CD4-positive, alpha-beta memory T cell (primary cell): ENCODE measurements at regions of chr11 and their contacts with region 1.

Region 1: DNA sequence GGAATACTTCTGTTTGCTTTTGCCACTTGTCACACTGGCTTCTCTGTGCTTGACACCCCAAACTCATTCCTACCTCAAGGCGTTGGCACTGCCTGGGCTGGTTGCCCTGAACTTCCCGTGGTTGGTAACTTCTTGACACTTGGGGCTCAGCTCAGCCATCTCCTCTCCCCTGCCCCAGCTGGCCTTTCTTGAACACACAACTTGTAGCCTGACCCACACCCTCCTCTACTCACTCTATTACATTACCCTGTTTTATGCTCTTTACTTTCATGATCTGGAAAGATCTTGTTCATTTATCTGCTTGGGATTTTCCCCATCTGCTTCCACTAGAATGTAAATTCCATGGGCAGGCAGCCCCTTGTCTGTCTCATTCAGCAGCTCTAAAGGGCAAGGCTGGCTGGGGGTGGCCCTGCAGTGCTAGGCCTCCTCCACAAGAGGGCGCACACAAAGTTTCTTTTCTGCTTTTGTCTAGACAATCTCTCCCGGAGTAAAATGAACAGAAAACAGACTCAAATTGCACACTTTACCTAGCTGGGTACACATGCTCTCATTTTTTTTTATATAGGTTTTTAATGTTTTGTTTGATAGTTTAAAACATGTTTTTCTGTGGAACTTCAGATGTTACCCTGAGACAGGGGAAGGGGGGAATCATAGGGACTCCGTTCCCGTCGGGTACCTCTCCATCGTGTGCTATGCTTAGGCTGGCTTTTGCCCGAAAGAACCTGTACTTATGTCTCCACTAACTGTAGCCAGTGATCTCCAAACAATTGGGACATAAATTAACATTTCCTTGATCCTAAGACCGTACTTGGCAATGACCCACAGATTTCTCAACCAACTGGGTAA is 16.4 kb upstream of the MRGPRX2 start:
- DNase-seq: peak; percentile 34 to 54 (median 40)
- H3K4me3 ChIP-seq: no peak overlapping the region
- H3K4me3 Mint-ChIP-seq: no peak overlapping the region
- H3K27ac ChIP-seq: no peak overlapping the region
- H3K27ac Mint-ChIP-seq: no peak overlapping the region
- H3K4me1 ChIP-seq: no peaks in the 10 kb centered on the region
- H3K4me1 Mint-ChIP-seq: peaks cover 0 to under 1% (median 0%) of the 10 kb centered on the region in 4 donors
- H3K27me3 ChIP-seq: no peaks in the 10 kb centered on the region
- H3K27me3 Mint-ChIP-seq: peaks cover 5 to 8% of the 10 kb centered on the region in 2 donors

Region 2: GRCh38 chr11:19060629-19061028 is 16.3 kb before region 1 on chr11 and contains the start of gene MRGPRX2:
- CTCF ChIA-PET with region 1: interaction called, 50 read pairs
- POLR2A ChIA-PET with region 1: no interaction called
- intact Hi-C with region 1: no loop called
- DNase-seq: peak in 1 of 5 donors; percentile 1
- H3K4me3 ChIP-seq: no peak within 1 kb of the TSS
- H3K4me3 Mint-ChIP-seq: peak within 1 kb of the TSS in 7 of 8 donors; percentile 4 to 70 (median 35)
- H3K27ac ChIP-seq: no peak within 1 kb of the TSS
- H3K27ac Mint-ChIP-seq: peak within 1 kb of the TSS in 5 of 7 donors; percentile 25 to 71 (median 54)
- H3K4me1 ChIP-seq: peaks cover 20% of the 10 kb centered on the region
- H3K4me1 Mint-ChIP-seq: peaks cover 15 to 29% (median 21%) of the 10 kb centered on the region in 4 donors
- H3K27me3 ChIP-seq: no peaks in the 10 kb centered on the region
- H3K27me3 Mint-ChIP-seq: peaks cover 0 to under 1% of the 10 kb centered on the region in 2 donors
- total RNA-seq, gene MRGPRX2: not detected

Region 3: DNA sequence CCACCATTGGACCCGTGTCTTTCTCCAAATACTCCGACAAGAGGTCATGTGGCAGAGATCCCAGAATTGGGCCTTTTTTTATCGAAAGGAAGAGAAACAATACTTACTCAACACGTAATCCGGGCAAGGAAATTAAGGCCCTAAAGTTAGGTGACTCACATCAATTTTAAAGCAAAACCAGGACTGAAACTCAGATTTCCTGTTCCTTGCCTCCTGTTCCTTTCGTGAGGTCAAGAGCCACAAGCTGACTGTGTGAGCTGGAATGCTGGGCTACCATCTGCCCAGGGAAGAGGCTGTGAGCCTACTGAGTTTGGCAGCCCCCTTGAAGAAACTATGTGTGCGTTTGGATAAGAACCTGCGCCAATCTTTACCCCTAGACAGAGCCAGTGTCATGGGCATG is 10.7 kb after region 1 on chr11:
- CTCF ChIA-PET with region 1: interaction called, 19 read pairs
- POLR2A ChIA-PET with region 1: no interaction called
- intact Hi-C with region 1: no loop called
- DNase-seq: no peak
- H3K4me3 ChIP-seq: no peak overlapping the region
- H3K4me3 Mint-ChIP-seq: no peak overlapping the region
- H3K27ac ChIP-seq: no peak overlapping the region
- H3K27ac Mint-ChIP-seq: no peak overlapping the region
- H3K4me1 ChIP-seq: no peaks in the 10 kb centered on the region
- H3K4me1 Mint-ChIP-seq: no peaks in the 10 kb centered on the region
- H3K27me3 ChIP-seq: no peaks in the 10 kb centered on the region
- H3K27me3 Mint-ChIP-seq: peaks cover 13 to 14% of the 10 kb centered on the region in 2 donors

Region 4: GRCh38 chr11:19116971-19117750 is 40.2 kb after region 1 on chr11 and contains the start of gene ZDHHC13:
- CTCF ChIA-PET with region 1: interaction called, 5 read pairs
- POLR2A ChIA-PET with region 1: interaction called, 3 read pairs
- intact Hi-C with region 1: loop called (anchors 1 kb)
- DNase-seq: peak; percentile 91 to 93 (median 92)
- H3K4me3 ChIP-seq: peak within 1 kb of the TSS; percentile 78 to 81
- H3K4me3 Mint-ChIP-seq: peak within 1 kb of the TSS; percentile 90 to 98 (median 94)
- H3K27ac ChIP-seq: peak within 1 kb of the TSS; percentile 73
- H3K27ac Mint-ChIP-seq: peak within 1 kb of the TSS; percentile 46 to 97 (median 92)
- H3K4me1 ChIP-seq: peaks cover 44% of the 10 kb centered on the region
- H3K4me1 Mint-ChIP-seq: peaks cover 40 to 59% (median 48%) of the 10 kb centered on the region in 4 donors
- H3K27me3 ChIP-seq: no peaks in the 10 kb centered on the region
- H3K27me3 Mint-ChIP-seq: peaks cover 0 to 2% of the 10 kb centered on the region in 2 donors
- total RNA-seq, gene ZDHHC13: 15.6 to 16.1 TPM

Region 5: DNA sequence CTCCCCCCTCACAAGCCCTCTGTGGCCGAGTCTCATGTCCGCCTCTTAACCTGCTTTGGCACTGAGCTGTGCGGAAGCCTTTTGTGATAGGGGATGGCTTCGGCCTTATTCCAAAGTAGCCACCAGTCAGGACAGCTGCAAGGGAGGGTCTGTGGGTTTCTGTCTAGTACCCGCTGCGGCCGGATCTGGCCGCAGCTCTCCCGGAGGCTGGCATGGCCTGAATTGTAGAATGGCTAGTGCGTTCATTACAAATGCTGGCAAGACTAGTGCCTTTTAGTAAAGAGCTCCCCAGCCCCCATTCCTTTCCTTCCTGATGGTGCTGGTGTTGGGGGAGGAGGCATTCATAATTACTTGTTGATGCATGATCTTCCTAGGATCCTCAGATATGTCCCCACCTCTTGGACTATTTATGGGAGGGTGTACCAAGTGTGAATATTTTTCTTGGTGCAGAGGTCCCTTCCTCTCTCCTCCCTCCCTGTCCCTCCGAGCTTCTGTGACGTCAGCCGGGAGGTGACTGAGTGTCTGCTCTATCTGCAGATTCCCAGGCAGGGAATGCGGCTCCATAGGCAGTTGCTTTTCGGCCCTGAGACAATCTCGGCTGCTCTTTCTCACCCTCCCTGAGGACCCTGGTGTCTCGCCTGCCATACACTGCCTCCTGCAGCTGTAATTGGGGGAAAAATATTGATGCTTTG is 272.5 kb after region 1 on chr11:
- CTCF ChIA-PET with region 1: no interaction called
- POLR2A ChIA-PET with region 1: no interaction called
- intact Hi-C with region 1: no loop called
- DNase-seq: no peak
- H3K4me3 ChIP-seq: no peak overlapping the region
- H3K4me3 Mint-ChIP-seq: no peak overlapping the region
- H3K27ac ChIP-seq: no peak overlapping the region
- H3K27ac Mint-ChIP-seq: no peak overlapping the region
- H3K4me1 ChIP-seq: no peaks in the 10 kb centered on the region
- H3K4me1 Mint-ChIP-seq: peaks cover 0 to 10% (median 5%) of the 10 kb centered on the region in 4 donors
- H3K27me3 ChIP-seq: peaks cover 8% of the 10 kb centered on the region
- H3K27me3 Mint-ChIP-seq: peaks cover 47 to 53% of the 10 kb centered on the region in 2 donors

Region 6: DNA sequence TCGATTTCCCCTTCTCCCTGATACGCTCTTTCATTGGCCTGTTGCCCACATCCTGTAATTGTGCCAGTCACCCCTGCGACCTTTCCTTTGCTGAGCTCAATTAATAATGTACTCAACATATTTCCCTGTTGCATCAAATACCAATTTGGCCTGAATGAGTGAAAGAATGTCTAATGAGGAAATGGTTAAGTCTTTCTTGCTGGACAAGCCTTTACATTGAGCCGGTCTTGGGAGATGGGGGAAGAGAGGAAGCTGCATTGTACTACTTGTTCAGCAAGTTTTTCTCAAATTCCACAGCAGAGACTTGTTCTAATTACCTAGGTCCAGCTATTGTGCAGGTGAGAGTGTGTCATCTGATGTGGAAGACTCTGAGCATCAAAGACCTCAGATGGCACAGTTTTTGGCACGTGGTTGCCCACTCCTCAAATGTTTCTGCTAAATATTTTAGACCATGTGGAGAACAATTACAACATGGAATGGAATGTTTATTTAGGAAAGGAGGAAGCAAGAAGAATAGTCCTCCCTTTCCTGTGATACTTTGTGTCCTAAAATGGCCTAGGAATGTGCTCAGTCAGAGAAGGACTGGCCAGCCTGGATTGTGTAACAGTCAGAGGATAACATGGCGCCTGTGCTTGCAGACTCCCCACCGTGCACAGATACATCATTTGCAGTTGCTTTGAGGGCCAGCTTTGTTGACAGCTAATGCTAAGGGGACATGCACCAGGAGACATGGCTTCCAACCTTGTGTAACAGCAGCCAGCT is 293.3 kb after region 1 on chr11:
- CTCF ChIA-PET with region 1: no interaction called
- POLR2A ChIA-PET with region 1: no interaction called
- intact Hi-C with region 1: no loop called
- DNase-seq: no peak
- H3K4me3 ChIP-seq: no peak overlapping the region
- H3K4me3 Mint-ChIP-seq: no peak overlapping the region
- H3K27ac ChIP-seq: no peak overlapping the region
- H3K27ac Mint-ChIP-seq: no peak overlapping the region
- H3K4me1 ChIP-seq: no peaks in the 10 kb centered on the region
- H3K4me1 Mint-ChIP-seq: no peaks in the 10 kb centered on the region
- H3K27me3 ChIP-seq: no peaks in the 10 kb centered on the region
- H3K27me3 Mint-ChIP-seq: peaks cover 9 to 22% of the 10 kb centered on the region in 2 donors